Activated CD4-positive, alpha-beta T cell treated with anti-CD3 and anti-CD28 coated beads for 36 hours (primary cell): ENCODE measurements at regions of chr21 and their contacts with region 1.

Region 1: GRCh38 chr21:29449306-29449950 is 150.7 kb downstream of the BACH1 start:
- DNase-seq: peak; percentile 23
- ATAC-seq: peak; percentile 89
- H3K4me3 Mint-ChIP-seq: peak overlapping the region; percentile 65
- H3K27ac Mint-ChIP-seq: peak overlapping the region; percentile 90
- H3K4me1 Mint-ChIP-seq: peaks cover 28% of the 10 kb centered on the region
- H3K27me3 Mint-ChIP-seq: no peaks in the 10 kb centered on the region

Region 2: GRCh38 chr21:29656504-29657239 is 207.2 kb after region 1 on chr21:
- CTCF ChIA-PET with region 1: no interaction called
- POLR2A ChIA-PET with region 1: no interaction called
- intact Hi-C with region 1: loop called in 1 of 2 experiments (anchors 1 kb)
- DNase-seq: peak; percentile 7
- ATAC-seq: peak; percentile 98
- H3K4me3 Mint-ChIP-seq: peak overlapping the region; percentile 48
- H3K27ac Mint-ChIP-seq: peak overlapping the region; percentile 82
- H3K4me1 Mint-ChIP-seq: peaks cover 34% of the 10 kb centered on the region
- H3K27me3 Mint-ChIP-seq: peaks cover 2% of the 10 kb centered on the region

Region 3: DNA sequence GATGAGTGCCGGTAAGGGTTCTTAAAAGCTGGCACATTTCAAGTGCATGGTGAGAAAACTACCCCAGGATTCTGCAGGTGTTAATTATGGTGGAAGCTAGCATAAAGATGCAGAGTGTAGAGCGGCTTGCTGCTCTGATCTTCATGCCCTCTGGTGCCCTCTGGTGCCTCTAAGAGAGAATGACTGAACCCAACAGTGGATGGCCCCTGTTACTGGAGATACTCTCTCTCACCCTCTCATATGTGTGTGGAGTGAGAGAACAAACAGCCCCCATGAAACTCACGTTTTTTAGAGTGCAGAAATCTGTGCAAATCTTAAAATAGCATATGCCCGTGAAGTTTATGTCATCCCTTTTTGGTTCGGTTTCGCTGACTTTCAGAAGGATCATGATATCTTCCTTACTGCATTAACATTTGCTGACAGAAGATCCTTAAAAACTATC is 400.3 kb after region 1 on chr21:
- CTCF ChIA-PET with region 1: no interaction called
- POLR2A ChIA-PET with region 1: no interaction called
- intact Hi-C with region 1: no loop called
- DNase-seq: peak; percentile 64
- ATAC-seq: peak; percentile 95
- H3K4me3 Mint-ChIP-seq: no peak overlapping the region
- H3K27ac Mint-ChIP-seq: no peak overlapping the region
- H3K4me1 Mint-ChIP-seq: no peaks in the 10 kb centered on the region
- H3K27me3 Mint-ChIP-seq: peaks cover 14% of the 10 kb centered on the region